Common myeloid progenitor, CD34-positive (primary cell): ENCODE measurements at regions of chr4 and their contacts with region 1.

Region 1: GRCh38 chr4:159206427-159206871 is 103.6 kb downstream of the RAPGEF2 start:
- DNase-seq: peak; percentile 67 to 95 (median 93)
- H3K4me3 ChIP-seq: peak overlapping the region in 5 of 7 experiments; percentile 24 to 69 (median 30)
- H3K27ac ChIP-seq: peak overlapping the region in 1 of 2 experiments; percentile 27
- H3K4me1 ChIP-seq: peaks cover 15 to 59% (median 29%) of the 10 kb centered on the region in 4 experiments
- H3K27me3 ChIP-seq: no peaks in the 10 kb centered on the region

Region 2: DNA sequence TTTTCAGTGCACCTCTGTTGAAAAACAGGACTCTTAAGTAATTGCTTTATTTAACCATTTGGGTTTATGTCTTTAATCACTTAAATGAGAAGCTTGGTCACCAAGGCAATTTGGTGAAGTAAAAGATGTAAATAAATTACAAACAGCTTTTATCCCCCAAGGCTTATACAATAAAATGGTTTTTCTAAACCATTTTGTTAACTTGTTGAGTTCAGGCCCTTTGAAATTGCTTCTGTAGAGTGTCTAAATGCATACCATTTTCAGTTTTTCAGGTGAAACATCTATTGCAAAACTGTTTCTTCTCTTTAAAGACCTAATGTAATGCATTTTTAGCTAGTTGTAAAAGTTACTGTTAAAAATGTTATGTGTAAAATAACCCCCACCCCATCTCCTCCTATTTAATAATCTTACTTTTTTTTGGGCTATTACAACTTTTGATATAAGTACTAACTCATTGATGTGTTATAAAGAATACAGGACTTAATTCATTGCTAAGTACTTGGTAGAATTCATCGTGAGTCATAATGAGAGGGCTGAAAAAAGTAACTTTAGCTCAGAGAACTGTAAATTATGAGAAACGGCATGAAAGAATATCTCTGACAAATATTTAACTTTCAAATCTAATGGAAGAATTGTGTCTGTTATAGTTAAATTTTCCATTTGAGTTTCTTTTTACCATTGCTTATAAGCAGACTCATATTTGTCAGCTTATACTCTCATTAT is 99.1 kb before region 1 on chr4:
- CTCF ChIA-PET with region 1: no interaction called
- POLR2A ChIA-PET with region 1: no interaction called
- DNase-seq: peak in 2 of 3 donors; percentile 43 to 64
- H3K4me3 ChIP-seq: peak overlapping the region in 6 of 7 experiments; percentile 81 to 98 (median 90)
- H3K27ac ChIP-seq: peak overlapping the region; percentile 37 to 87
- H3K4me1 ChIP-seq: peaks cover 29 to 71% (median 48%) of the 10 kb centered on the region in 4 experiments
- H3K27me3 ChIP-seq: no peaks in the 10 kb centered on the region

Region 3: GRCh38 chr4:159175085-159175988 is 31.1 kb before region 1 on chr4:
- CTCF ChIA-PET with region 1: interaction called, 18 read pairs
- POLR2A ChIA-PET with region 1: no interaction called
- DNase-seq: peak; percentile 88 to 94 (median 93)
- H3K4me3 ChIP-seq: peak overlapping the region in 5 of 7 experiments; percentile 16 to 69 (median 36)
- H3K27ac ChIP-seq: peak overlapping the region; percentile 30 to 72
- H3K4me1 ChIP-seq: peaks cover 26 to 82% (median 63%) of the 10 kb centered on the region in 4 experiments
- H3K27me3 ChIP-seq: no peaks in the 10 kb centered on the region

Region 4: DNA sequence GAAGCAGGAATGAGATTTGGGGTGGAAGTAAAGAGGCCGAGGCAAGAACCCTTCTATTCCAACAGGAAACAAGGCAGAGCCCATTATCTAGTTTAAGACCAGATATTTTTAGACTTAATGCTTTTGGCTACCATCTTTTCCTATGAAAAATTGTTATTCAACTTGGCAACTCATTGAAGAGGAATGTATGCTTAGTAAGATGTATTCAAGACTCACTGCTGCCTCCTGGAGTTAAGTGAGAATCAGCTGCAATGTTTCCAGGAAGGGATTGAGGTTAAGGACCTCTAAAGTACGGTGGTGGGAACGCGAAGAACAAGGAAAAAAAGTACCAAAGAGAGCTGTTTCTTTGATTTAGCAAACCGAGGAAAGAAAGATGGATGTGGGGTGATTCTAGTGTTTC is 14.5 kb before region 1 on chr4:
- CTCF ChIA-PET with region 1: interaction called, 27 read pairs
- POLR2A ChIA-PET with region 1: no interaction called
- DNase-seq: peak in 2 of 3 donors; percentile 47 to 57
- H3K4me3 ChIP-seq: no peak overlapping the region
- H3K27ac ChIP-seq: no peak overlapping the region
- H3K4me1 ChIP-seq: peaks cover 7 to 57% (median 21%) of the 10 kb centered on the region in 4 experiments
- H3K27me3 ChIP-seq: no peaks in the 10 kb centered on the region